Posterior vena cava (tissue), 2 donors: ENCODE measurements at regions of chr22 and their contacts with region 1.

Region 1: GRCh38 chr22:48937032-48937639 is 890.5 kb downstream of the BRD1 start:
- DNase-seq: no peak

Region 2: DNA sequence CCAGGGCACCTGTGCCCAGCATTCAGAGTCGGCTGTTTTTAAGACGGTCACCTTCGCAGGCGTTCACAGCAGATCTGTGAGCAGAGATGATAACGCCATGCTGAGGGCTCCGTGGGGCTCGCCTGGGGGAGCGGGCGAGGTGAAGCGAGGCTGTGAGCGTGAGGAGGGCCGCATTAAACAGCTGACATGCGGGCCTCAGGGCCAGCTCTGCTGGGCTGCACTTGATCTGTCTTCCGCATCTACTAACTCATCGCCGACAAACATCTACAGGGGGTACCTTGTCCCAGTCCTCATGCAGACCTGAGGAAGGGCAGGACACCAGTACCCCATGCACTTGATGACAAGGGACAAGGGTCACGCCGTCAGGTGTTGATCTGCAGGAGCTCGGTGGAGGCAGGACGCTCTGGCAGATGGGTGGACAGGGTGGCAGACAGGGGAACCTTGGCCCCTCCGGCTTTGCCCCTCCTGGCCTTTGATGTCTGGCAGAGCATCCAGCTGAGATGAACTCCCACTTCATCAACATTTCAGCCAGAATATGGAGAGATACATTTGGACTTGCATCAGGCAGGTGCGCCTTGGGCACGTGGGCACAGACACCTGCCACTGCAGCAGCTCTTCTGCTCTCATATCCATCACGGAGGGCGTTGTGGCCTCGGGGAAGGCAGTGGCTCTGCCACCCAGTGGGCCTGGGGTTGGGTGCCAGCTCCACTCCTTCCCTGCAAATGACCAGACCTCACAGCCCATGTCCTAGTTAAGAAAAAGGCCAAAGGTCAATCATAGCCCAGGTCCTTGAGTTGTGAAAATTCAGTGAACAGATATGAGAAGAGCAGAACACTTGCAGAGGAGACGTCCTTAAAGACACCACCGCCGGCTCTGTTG is 67.6 kb after region 1 on chr22:
- intact Hi-C with region 1: loop called in 1 of 2 experiments (anchors 2 kb)
- DNase-seq: peak; percentile 56